Endothelial cell of umbilical vein (primary cell): ENCODE measurements at regions of chr3 and their contacts with region 1.

Region 1: GRCh38 chr3:4978204-4978965 is 852 bp upstream of the BHLHE40 start:
- DNase-seq: peak; percentile 98
- H3K4me3 ChIP-seq: peak overlapping the region; percentile 2 to 65 (median 63)
- H3K27ac ChIP-seq: peak overlapping the region; percentile 98
- H3K4me1 ChIP-seq: peaks cover 42% of the 10 kb centered on the region
- H3K27me3 ChIP-seq: no peaks in the 10 kb centered on the region
- CTCF ChIP-seq: no peak
- POLR2A ChIP-seq: peak; percentile 75

Region 2: DNA sequence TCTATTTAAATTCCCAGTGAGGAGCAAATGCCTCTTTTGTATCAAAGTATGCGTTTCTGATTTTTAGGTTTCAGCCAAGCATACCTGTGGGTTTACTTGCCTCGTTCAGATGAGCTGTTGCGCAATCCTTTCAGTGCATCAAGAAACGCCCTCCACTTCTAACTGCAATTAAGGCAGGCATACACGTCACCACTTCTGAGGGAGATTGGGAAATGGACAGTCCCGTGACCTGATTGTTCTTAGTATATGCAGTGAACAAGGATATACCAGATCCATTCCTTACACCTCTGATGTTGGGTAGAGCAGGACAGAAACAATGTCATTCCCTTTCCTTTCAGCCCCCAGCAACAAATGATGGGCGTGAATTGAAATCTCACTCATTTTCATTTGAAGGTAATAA is 266.2 kb before region 1 on chr3:
- CTCF ChIA-PET with region 1: interaction called, 284 read pairs
- POLR2A ChIA-PET with region 1: interaction called, 4 read pairs
- dilution Hi-C with region 1: no loop called
- intact Hi-C with region 1: loop called (anchors 1 kb)
- DNase-seq: no peak
- H3K4me3 ChIP-seq: no peak overlapping the region
- H3K27ac ChIP-seq: no peak overlapping the region
- H3K4me1 ChIP-seq: peaks cover 15% of the 10 kb centered on the region
- H3K27me3 ChIP-seq: no peaks in the 10 kb centered on the region
- CTCF ChIP-seq: no peak
- POLR2A ChIP-seq: no peak

Region 3: GRCh38 chr3:4741404-4742307 is 236.7 kb before region 1 on chr3:
- CTCF ChIA-PET with region 1: interaction called, 4 read pairs
- POLR2A ChIA-PET with region 1: interaction called, 3 read pairs
- dilution Hi-C with region 1: no loop called
- intact Hi-C with region 1: loop called (anchors 1 kb)
- DNase-seq: peak; percentile 99
- H3K4me3 ChIP-seq: peak overlapping the region in 1 of 3 experiments; percentile 10
- H3K27ac ChIP-seq: peak overlapping the region; percentile 99
- H3K4me1 ChIP-seq: peaks cover 28% of the 10 kb centered on the region
- H3K27me3 ChIP-seq: no peaks in the 10 kb centered on the region
- CTCF ChIP-seq: no peak
- POLR2A ChIP-seq: peak; percentile 41

Region 4: GRCh38 chr3:4831580-4831950 is 146.8 kb before region 1 on chr3:
- CTCF ChIA-PET with region 1: interaction called, 6 read pairs
- POLR2A ChIA-PET with region 1: no interaction called
- dilution Hi-C with region 1: no loop called
- intact Hi-C with region 1: loop called (anchors 1 kb)
- DNase-seq: no peak
- H3K4me3 ChIP-seq: no peak overlapping the region
- H3K27ac ChIP-seq: peak overlapping the region; percentile 97
- H3K4me1 ChIP-seq: peaks cover 19% of the 10 kb centered on the region
- H3K27me3 ChIP-seq: no peaks in the 10 kb centered on the region
- CTCF ChIP-seq: no peak
- POLR2A ChIP-seq: peak; percentile 3

Region 5: GRCh38 chr3:5026331-5027218 is 48.2 kb after region 1 on chr3:
- CTCF ChIA-PET with region 1: interaction called, 327 read pairs
- POLR2A ChIA-PET with region 1: interaction called, 46 read pairs
- dilution Hi-C with region 1: no loop called
- intact Hi-C with region 1: loop called (anchors 1 kb)
- DNase-seq: peak; percentile 93
- H3K4me3 ChIP-seq: peak overlapping the region in 2 of 3 experiments; percentile 29 to 48
- H3K27ac ChIP-seq: peak overlapping the region; percentile 97
- H3K4me1 ChIP-seq: peaks cover 29% of the 10 kb centered on the region
- H3K27me3 ChIP-seq: no peaks in the 10 kb centered on the region
- CTCF ChIP-seq: peak; percentile 62 to 85
- POLR2A ChIP-seq: no peak

Region 6: GRCh38 chr3:5187156-5187919 is 209.0 kb after region 1 on chr3 and contains the start of gene EDEM1:
- CTCF ChIA-PET with region 1: no interaction called
- POLR2A ChIA-PET with region 1: no interaction called
- dilution Hi-C with region 1: no loop called
- intact Hi-C with region 1: loop called (anchors 2 kb)
- DNase-seq: peak; percentile 98
- H3K4me3 ChIP-seq: peak within 1 kb of the TSS; percentile 82 to 88 (median 83)
- H3K27ac ChIP-seq: peak within 1 kb of the TSS; percentile 92
- H3K4me1 ChIP-seq: peaks cover 21% of the 10 kb centered on the region
- H3K27me3 ChIP-seq: no peaks in the 10 kb centered on the region
- CTCF ChIP-seq: no peak
- POLR2A ChIP-seq: peak; percentile 72
- total RNA-seq, gene EDEM1: 61.1 and 65.4 TPM in 2 replicates